Dendritic cell treated with granulocyte-macrophage colony-stimulating factor and Interleukin-4, amounts not matched to agents 40 ng/mL and 50 ng/mL, for 4 days (primary cell): ENCODE measurements at regions of chr1 and their contacts with region 1.

Region 1: DNA sequence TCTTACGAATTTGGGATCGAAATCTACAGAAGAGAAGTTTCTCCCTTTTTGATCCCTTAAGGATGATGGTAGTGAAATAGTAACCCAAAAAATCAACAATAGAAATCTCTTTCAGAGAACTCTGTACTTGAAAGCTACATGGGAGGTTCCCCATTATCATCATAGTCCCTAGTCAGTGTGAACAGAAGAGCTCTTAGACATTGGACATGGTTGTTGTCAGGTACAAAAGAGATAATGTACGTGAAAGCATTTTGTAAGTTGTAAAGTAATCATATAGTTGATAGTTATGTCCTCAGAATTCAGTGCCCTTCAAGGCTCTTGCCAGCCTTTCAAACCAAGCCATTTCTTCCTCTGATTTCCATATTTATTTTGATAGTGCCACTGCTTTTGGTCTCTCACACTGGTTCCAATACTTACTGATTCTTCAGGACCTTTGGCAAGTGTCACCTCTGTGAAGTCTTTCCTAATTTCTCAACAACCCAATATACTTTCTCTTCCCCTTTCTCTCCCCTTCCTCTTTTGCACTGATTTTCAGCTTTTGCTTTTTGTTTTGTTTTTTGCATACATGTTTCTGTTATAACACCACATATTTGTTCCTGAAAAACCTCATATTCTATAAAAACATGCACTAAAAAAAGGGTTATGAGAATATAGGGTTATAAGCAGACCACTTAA is 22.4 kb downstream of the VPS45 start:
- H3K4me3 Mint-ChIP-seq: no peak overlapping the region
- H3K27ac Mint-ChIP-seq: no peak overlapping the region
- H3K4me1 Mint-ChIP-seq: peaks cover 18% of the 10 kb centered on the region
- H3K27me3 Mint-ChIP-seq: no peaks in the 10 kb centered on the region

Region 2: DNA sequence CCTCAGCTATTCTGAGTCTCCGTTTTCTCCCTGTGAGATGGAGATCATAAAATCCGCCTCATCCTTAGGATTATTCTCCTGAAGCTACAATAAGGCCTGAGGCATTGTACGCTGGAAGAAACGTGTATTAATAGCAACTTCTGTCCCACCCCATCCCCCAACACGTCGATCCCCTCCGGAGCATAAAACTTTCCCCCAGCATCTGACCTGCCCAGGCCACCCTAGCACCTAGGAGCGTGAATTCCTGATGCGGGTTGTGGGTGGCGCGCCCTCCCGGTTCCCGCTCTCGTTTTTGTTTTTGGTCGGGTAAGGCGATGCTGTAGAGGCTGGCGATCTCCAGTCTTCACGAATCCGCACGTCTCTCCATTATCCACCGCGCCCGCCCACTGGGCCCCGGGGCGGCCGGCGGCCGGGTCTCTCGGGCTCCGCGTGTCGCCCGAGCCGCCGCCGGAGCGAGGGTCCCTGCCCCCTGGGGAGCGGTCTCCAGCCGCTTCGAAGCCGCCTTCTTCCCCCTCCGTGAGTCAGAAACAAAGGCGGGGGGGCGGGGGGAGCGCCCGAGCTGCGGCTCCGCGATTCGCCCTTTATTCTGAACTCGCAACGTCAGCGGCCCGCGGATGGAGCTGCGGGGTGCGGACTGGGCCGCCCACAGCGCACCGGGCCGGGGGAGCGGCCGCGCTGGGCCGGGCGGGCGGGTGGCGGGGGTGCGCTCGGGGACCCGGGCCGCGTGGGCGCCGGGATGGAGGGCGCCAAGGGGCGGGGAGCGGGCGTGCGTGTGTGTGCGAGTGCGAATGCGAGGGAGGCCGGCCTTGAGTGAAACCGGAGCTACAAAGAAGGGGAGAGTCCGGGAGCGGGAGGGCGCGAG is 59.5 kb after region 1 on chr1 and contains the start of gene PLEKHO1:
- intact Hi-C with region 1: loop called (anchors 10 kb)
- H3K4me3 Mint-ChIP-seq: peak within 1 kb of the TSS; percentile 97
- H3K27ac Mint-ChIP-seq: peak within 1 kb of the TSS; percentile 92
- H3K4me1 Mint-ChIP-seq: peaks cover 68% of the 10 kb centered on the region
- H3K27me3 Mint-ChIP-seq: peaks cover 2% of the 10 kb centered on the region

Region 3: GRCh38 chr1:150168960-150169601 is 79.1 kb after region 1 on chr1:
- intact Hi-C with region 1: loop called (anchors 5 kb)
- H3K4me3 Mint-ChIP-seq: no peak overlapping the region
- H3K27ac Mint-ChIP-seq: no peak overlapping the region
- H3K4me1 Mint-ChIP-seq: peaks cover 51% of the 10 kb centered on the region
- H3K27me3 Mint-ChIP-seq: no peaks in the 10 kb centered on the region

Region 4: GRCh38 chr1:150309770-150310508 is 220.0 kb after region 1 on chr1:
- intact Hi-C with region 1: no loop called
- H3K4me3 Mint-ChIP-seq: no peak overlapping the region
- H3K27ac Mint-ChIP-seq: no peak overlapping the region
- H3K4me1 Mint-ChIP-seq: no peaks in the 10 kb centered on the region
- H3K27me3 Mint-ChIP-seq: no peaks in the 10 kb centered on the region